Activated CD8-positive, alpha-beta memory T cell treated with anti-CD3 and anti-CD28 coated beads, Interleukin-2, amount 10 ng/mL, durations not matched to agents 7 days and 5 days (primary cell): ENCODE measurements at regions of chr14 and their contacts with region 1.

Region 1: DNA sequence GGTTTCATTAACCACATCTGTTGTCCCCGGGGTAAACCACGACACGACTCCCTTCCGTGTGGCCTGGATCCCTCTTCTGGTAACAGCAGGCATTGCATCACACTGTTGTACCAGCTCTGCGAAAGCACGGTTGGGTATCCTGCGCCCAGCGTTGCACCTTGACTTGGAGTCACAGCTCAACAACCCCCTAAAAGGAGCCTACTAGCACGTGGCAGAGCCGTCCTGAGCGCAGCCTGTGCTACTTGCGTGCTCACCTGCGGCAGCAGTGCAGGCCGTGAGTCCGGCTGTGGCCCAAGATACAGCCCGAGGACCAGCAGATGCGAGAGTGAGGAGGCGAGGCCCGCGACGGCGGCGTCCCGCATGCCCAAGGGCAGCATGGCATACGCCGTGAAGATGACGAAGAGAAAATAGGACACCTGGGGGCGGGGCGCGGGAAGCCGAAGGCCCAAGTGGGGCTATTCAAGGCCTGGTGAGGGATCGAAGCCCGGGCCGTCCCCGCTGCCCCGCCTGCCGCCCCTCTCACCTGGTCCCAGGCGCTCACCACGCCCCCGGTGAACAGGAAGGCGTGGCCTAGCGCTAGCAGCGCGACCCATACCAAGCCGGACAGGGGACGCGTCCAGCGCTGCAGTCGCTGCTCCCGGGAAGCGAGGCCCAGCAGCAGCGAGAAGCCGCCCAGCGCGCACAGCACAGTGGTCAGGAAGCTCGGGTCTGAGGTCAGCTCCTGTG is 2.4 kb downstream of the ADCY4 start:
- DNase-seq: peak; percentile 92
- ATAC-seq: peak; percentile 66
- H3K4me3 Mint-ChIP-seq: peak overlapping the region; percentile 73
- H3K27ac Mint-ChIP-seq: peak overlapping the region; percentile 82
- H3K4me1 Mint-ChIP-seq: peaks cover 65% of the 10 kb centered on the region
- H3K27me3 Mint-ChIP-seq: peaks cover 38% of the 10 kb centered on the region

Region 2: DNA sequence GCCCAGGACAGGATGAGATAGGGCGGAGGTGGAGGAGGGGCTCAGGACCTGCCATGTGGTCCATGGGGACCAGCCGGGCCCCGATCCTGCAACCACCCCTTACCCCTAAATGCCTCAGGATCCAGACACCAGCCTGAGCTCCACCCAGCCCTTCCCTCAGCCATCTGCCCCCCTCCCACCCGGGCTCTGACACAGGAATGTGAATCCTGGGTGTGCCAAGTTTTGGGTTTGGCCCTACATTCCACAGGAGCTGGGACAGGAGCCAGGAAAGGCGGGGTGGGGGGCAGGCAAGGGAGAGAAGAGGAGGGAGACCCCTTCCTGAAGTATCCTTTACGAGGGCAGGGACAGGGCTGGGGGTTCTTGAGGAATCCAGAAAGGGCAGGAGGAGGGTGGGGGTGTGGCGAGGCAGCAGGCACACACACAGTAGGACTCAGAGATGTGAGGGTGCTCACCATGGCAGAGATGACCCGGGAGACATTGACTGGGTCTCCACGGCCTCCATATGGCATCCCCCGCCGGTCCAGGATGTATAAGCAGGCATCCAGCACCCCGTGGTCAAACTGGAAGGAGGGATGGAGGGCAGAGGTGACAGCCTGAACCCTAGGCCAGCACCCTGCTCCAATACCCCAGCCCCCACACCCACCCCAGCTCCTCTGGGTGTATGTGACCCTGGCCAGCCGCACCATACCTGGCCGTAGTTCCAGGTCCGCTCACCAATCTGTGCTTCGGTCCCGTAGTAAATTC is 73.0 kb before region 1 on chr14:
- CTCF ChIA-PET with region 1: no interaction called
- DNase-seq: no peak
- ATAC-seq: no peak
- H3K4me3 Mint-ChIP-seq: no peak overlapping the region
- H3K27ac Mint-ChIP-seq: no peak overlapping the region
- H3K4me1 Mint-ChIP-seq: no peaks in the 10 kb centered on the region
- H3K27me3 Mint-ChIP-seq: no peaks in the 10 kb centered on the region

Region 3: DNA sequence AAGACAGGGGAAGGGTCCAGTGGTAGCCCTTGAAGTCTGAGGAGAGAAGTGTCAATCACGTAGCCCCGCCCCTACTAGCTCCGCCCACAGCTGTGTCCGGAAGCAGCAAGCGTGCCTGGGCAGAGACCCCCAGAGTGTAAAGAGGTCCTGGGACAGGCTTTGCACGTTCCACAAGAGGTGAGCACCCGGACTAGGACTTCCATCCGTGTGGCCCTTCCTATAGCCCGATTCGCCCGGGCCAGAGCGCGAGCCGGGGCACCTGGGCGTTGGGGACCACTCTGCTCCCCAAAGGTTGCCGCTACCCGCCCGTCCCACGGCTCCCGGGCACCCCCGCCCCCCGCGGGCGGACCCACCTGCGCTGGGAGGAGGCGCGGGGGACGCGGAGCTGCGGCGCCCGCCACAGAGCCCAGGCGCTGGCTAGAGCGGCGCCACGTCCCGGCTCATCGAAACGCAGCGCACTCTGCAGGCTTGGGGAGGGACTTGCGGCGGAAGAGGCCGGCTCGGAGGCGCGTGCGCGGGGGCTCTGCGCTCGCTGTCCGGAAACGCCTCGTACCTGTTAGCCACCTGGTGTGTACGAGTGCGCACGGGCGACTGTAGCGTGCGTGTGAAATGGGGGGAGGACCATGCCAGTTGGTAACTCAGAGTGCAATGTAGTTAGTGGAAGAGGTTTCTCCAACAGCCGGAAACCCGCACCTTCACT is 61.1 kb before region 1 on chr14 and contains the start of gene RABGGTA:
- CTCF ChIA-PET with region 1: interaction called, 10 read pairs
- DNase-seq: peak; percentile 92
- ATAC-seq: peak; percentile 92
- H3K4me3 Mint-ChIP-seq: peak within 1 kb of the TSS; percentile 84
- H3K27ac Mint-ChIP-seq: peak within 1 kb of the TSS; percentile 93
- H3K4me1 Mint-ChIP-seq: peaks cover 41% of the 10 kb centered on the region
- H3K27me3 Mint-ChIP-seq: no peaks in the 10 kb centered on the region
- total RNA-seq, gene RABGGTA: 34.3 to 44.6 TPM

Region 4: GRCh38 chr14:24310646-24311604 is 21.5 kb before region 1 on chr14 and contains the start of gene LTB4R:
- CTCF ChIA-PET with region 1: interaction called, 148 read pairs
- DNase-seq: peak; percentile 80
- ATAC-seq: peak; percentile 90
- H3K4me3 Mint-ChIP-seq: peak within 1 kb of the TSS; percentile 75
- H3K27ac Mint-ChIP-seq: peak within 1 kb of the TSS; percentile 87
- H3K4me1 Mint-ChIP-seq: peaks cover 72% of the 10 kb centered on the region
- H3K27me3 Mint-ChIP-seq: no peaks in the 10 kb centered on the region
- total RNA-seq, gene LTB4R: 15.6 to 32.5 TPM

Region 5: DNA sequence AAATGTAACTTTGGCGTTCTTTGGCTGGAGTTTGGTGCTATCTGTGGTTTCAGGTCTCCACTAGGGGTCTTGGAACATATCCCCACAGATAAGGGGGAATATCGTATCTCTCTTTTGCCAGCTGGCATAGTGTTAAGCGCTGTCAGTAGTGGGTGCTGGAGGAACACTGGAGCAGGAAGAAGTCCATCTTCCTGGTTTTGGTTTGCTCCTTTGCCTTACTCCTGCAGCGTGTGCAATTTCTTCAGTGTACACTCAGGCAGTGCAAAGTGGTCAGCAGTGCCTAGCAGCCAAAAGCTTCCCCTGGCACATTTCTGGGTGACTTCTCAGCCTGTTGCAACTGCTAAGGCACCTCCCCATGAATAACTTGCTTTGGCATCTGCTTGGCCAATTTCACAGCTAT is 19.1 kb after region 1 on chr14:
- CTCF ChIA-PET with region 1: interaction called, 30 read pairs
- DNase-seq: no peak
- ATAC-seq: no peak
- H3K4me3 Mint-ChIP-seq: no peak overlapping the region
- H3K27ac Mint-ChIP-seq: no peak overlapping the region
- H3K4me1 Mint-ChIP-seq: no peaks in the 10 kb centered on the region
- H3K27me3 Mint-ChIP-seq: peaks cover 55% of the 10 kb centered on the region

Region 6: GRCh38 chr14:24372701-24373416 is 40.4 kb after region 1 on chr14:
- CTCF ChIA-PET with region 1: interaction called, 13 read pairs
- DNase-seq: no peak
- ATAC-seq: no peak
- H3K4me3 Mint-ChIP-seq: no peak overlapping the region
- H3K27ac Mint-ChIP-seq: no peak overlapping the region
- H3K4me1 Mint-ChIP-seq: no peaks in the 10 kb centered on the region
- H3K27me3 Mint-ChIP-seq: peaks cover 23% of the 10 kb centered on the region

Region 7: DNA sequence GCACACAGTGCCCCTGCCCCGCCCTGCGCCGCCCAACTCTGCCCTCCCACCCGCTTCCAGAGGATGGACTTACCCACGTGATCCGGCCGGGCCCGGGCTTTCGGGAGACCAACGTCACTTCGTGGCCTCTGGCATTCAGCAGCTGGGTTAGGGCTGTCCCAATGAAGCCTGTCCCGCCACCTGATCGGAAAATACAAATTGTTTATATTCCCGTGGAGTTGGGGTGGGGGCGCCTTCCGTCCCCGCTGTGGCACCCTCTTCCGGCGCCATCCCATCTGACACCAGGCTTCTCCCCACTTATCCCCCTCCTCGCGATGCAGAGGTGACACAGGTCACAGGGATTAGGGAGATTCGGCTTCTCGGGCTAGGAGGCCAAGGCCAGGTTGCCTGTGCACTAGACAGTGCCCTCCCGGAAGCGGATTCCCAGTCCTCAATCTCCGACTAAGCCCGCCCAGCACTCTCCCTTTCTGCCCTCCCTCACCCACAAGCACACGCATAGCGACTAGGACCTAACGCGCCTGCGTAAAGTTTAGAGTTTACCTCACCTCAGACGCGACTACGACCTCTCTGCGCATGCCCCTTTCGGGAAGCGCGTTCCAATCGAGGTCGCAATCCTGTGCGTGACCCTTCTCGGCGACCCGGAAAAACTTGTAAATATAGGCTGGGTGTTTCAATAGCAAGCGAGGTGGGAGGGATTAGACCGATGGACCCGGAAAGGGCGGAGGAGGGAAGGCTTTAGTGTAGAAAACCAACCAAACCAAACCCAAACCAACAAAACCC is 110.0 kb after region 1 on chr14 and contains the start of gene SDR39U1:
- CTCF ChIA-PET with region 1: interaction called, 854 read pairs
- DNase-seq: peak; percentile 99
- ATAC-seq: peak; percentile 94
- H3K4me3 Mint-ChIP-seq: peak within 1 kb of the TSS; percentile 90
- H3K27ac Mint-ChIP-seq: peak within 1 kb of the TSS; percentile 98
- H3K4me1 Mint-ChIP-seq: peaks cover 53% of the 10 kb centered on the region
- H3K27me3 Mint-ChIP-seq: peaks cover 2% of the 10 kb centered on the region
- total RNA-seq, gene SDR39U1: 45.6 to 45.9 TPM

Region 8: GRCh38 chr14:24542346-24542936 is 210.0 kb after region 1 on chr14:
- CTCF ChIA-PET with region 1: no interaction called
- DNase-seq: no peak
- ATAC-seq: no peak
- H3K4me3 Mint-ChIP-seq: no peak overlapping the region
- H3K27ac Mint-ChIP-seq: no peak overlapping the region
- H3K4me1 Mint-ChIP-seq: peaks cover 11% of the 10 kb centered on the region
- H3K27me3 Mint-ChIP-seq: peaks cover 41% of the 10 kb centered on the region

Region 9: DNA sequence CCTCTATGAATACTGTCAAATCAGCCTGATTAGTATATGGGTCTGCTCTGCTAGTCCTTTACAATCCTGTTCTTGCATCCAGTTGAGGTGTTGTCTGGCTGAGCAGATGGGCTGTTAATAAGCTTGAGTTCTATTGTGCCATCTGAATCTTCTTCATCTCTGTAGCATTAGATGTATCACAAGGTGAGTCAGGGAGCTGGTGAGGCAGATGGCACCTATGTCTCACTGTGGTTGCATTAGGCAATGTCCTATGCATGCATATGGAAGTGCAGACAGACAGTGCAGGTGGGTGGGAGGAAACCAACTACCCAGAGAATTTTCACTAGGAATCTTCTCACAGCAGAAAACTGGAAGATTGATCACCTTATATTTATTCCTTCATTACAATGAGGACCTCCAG is 883.2 kb after region 1 on chr14:
- CTCF ChIA-PET with region 1: no interaction called
- DNase-seq: no peak
- ATAC-seq: no peak
- H3K4me3 Mint-ChIP-seq: no peak overlapping the region
- H3K27ac Mint-ChIP-seq: no peak overlapping the region
- H3K4me1 Mint-ChIP-seq: no peaks in the 10 kb centered on the region
- H3K27me3 Mint-ChIP-seq: no peaks in the 10 kb centered on the region